ENCODE measurements at regions of chr11 and their contacts with region 1.

Region 1: DNA sequence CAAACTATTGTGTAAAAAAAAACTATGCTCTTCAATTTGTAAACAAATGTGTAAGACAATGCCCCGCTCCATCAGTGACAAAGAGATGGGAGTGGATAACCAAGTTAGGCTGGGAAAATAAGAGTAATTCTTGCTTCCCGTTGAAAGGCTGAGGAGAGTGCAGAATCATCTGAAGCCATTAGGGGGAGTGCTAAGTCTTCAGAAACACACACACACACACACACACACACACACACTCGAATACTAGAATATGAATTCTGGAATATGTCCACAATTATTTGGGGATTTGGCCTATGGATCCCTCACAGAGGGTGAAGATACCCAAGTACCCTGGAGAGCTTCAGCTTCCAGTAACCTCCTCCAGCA is 27.8 kb upstream of the ROBO3 start:
- DNase-seq: no peak

Region 2: GRCh38 chr11:123608945-123609344 is 1228.5 kb before region 1 on chr11:
- intact Hi-C with region 1: loop called in 1 of 2 experiments (anchors 5 kb)
- DNase-seq: no peak

Region 3: DNA sequence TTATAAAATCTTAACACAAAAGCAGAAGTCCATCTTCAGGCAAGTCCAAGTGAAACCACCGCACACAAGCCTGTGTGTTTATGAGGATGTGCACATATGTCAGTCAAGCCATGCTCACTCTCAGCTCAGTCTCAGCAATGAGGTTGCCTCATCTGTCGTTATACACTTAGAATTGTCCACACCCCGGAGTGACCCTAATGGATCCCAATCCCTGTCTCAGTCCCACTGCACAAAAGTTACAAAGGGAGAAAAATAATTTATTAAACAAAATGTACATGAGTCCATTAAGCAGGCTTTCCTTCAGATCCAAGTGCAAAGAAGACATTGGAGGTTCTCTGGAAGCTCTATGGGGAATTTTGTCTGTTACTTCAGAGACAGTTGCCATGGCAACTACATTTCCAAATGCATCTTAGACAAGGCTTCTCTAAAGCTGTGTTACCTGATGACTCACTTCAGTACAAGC is 318.5 kb before region 1 on chr11:
- intact Hi-C with region 1: no loop called
- DNase-seq: no peak

Region 4: DNA sequence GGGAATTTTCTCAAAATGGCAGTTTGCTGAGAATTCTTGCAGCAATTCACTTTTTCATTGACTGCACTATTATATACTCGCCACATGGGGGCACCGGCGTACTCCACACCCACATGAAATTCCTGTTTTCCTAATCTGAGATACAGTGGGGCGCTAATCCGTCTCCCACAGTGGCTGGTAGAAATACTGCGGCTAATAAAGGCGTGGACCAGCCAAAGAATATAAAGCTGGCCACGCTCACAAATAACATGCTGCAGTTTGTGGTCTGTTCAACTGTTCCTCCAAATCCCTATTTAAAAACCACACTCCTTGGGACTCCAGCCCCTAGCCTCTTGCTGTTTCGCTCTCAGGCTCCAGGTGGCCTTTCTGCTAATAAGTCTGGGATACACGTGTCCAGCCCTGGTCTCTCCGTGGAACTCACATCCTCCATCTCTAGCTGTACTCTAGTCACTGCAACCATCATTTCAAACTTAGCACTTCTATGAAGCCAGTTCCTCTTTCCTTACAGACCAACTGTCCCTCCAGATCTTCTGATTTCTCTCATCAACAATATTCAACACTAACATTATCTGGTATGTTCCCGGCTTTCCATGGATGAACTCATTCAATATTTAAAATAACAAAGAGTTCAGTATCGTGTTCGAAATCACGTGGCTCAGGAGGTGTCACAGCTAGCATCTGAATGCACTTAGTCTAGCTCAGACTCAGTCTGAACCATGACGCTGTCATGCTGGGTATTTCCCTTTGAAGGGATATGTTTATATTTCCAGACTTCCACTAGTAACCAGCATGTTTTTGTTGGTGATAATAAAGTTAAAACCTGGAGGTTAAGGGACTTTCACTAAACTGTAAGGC is 192.8 kb before region 1 on chr11:
- intact Hi-C with region 1: loop called (anchors 2 kb)
- DNase-seq: peak; percentile 83

Region 5: GRCh38 chr11:124673333-124674167 is 163.9 kb before region 1 on chr11 and contains the starts of genes SIAE and SPA17:
- intact Hi-C with region 1: loop called (anchors 2 to 5 kb)
- DNase-seq: peak; percentile 98
- total RNA-seq, gene SIAE: 6.4 to 16.8 TPM
- total RNA-seq, gene SPA17: 3.4 to 4.0 TPM